ENCODE measurements at regions of chr3 and their contacts with region 1.

Region 1: GRCh38 chr3:46705022-46705530 is 3.9 kb downstream of the TMIE start:
- DNase-seq: peak; percentile 64 to 79 (median 71)
- ATAC-seq: peak; percentile 75 to 86 (median 80)
- H3K4me3 ChIP-seq: no peak overlapping the region
- H3K27ac ChIP-seq: no peak overlapping the region
- H3K4me1 ChIP-seq: peaks cover 4 to 31% (median 16%) of the 10 kb centered on the region in 12 donors
- H3K27me3 ChIP-seq: peaks cover 0 to 19% (median 0%) of the 10 kb centered on the region in 9 donors
- CTCF ChIP-seq: peak; percentile 94 to 99 (median 96)
- POLR2A ChIP-seq: peak in 1 of 2 donors; percentile 16

Region 2: GRCh38 chr3:46542801-46543201 is 162.3 kb before region 1 on chr3:
- intact Hi-C with region 1: no loop called
- DNase-seq: peak in 1 of 5 donors; percentile 38
- ATAC-seq: peak; percentile 34 to 54 (median 46)
- H3K4me3 ChIP-seq: no peak overlapping the region
- H3K27ac ChIP-seq: peak overlapping the region in 1 of 12 donors; percentile 47
- H3K4me1 ChIP-seq: peaks cover 0 to 33% (median 12%) of the 10 kb centered on the region in 12 donors
- H3K27me3 ChIP-seq: no peaks in the 10 kb centered on the region
- CTCF ChIP-seq: no peak
- POLR2A ChIP-seq: no peak

Region 3: GRCh38 chr3:46866720-46867549 is 161.9 kb after region 1 on chr3:
- intact Hi-C with region 1: loop called in 2 of 10 experiments (anchors 2 to 10 kb)
- DNase-seq: peak; percentile 80 to 93 (median 86)
- ATAC-seq: peak in 3 of 4 donors; percentile 8 to 32 (median 18)
- H3K4me3 ChIP-seq: no peak overlapping the region
- H3K27ac ChIP-seq: peak overlapping the region; percentile 63 to 100 (median 86)
- H3K4me1 ChIP-seq: peaks cover 13 to 78% (median 38%) of the 10 kb centered on the region in 12 donors
- H3K27me3 ChIP-seq: no peaks in the 10 kb centered on the region
- CTCF ChIP-seq: peak; percentile 83 to 93 (median 88)
- POLR2A ChIP-seq: no peak

Region 4: DNA sequence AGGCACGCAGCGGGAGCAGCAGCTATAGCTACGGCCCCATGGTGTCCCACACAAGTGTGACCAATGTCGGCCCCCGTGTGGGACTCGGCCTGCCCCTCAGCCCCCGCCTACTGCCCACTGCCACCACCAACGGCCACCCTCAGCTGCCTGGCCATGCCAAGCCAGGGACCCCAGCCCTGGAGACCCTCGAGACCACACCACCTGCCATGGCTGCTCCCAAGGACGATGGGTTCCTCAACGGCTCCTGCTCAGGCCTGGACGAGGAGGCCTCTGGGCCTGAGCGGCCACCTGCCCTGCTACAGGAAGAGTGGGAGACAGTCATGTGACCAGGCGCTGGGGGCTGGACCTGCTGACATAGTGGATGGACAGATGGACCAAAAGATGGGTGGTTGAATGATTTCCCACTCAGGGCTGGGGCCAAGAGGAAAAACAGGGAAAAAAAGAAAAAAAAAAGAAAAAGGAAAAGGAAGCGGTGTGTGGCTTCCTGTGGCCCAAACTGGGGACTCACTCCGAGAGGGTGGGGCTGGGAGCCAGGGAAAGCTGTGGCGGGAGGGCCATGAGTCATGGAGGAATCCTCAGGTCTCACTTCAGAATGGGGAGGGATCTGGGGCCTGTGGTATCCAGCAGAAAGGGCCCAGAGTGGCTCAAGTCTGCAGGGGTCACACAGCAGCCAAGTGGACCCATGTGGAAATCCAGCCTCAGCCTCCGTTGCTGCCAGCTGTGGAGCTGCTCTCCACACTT is 198.4 kb after region 1 on chr3:
- intact Hi-C with region 1: loop called in 5 of 10 experiments (anchors 2 to 5 kb)
- DNase-seq: peak in 2 of 5 donors; percentile 33 to 43
- ATAC-seq: peak in 2 of 4 donors; percentile 5 to 26
- H3K4me3 ChIP-seq: no peak overlapping the region
- H3K27ac ChIP-seq: no peak overlapping the region
- H3K4me1 ChIP-seq: peaks cover 0 to 27% (median 9%) of the 10 kb centered on the region in 12 donors
- H3K27me3 ChIP-seq: peaks cover 0 to 8% (median 0%) of the 10 kb centered on the region in 9 donors
- CTCF ChIP-seq: no peak
- POLR2A ChIP-seq: no peak

Region 5: DNA sequence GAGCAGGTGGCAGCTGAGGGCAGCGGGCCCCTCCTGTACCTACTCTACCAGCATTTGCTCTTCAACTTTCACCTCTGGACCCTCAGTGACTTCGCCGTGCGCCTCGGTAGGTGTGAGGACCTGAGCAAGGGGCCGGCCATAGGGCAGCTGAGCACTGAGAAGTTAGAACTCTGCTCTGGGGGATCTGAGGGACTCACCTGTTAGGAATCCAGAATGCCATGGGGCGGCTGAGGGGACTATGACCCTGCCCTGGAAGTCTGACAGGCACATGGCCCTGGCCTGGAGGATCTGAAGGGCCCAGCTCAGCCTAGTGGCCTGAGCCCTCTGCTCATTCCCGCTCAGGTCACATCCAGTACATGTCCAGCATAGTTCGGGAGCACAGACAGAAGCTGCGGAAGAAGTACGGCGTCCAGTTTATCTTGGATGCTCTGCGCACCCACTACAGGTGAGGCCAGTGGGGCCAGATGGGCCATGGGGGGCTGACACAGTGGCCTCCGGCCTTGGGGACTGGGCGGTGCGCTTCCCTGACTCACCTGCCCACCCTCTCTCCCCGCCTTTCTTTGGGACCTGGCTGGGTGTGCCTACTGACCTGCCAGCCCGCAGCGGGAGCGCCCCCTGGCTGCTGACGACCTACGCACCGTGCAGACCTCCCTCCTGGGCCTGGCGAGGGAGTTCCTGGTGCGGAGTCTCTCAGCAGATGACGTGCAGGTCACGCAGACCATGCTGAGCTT is 293.2 kb after region 1 on chr3:
- intact Hi-C with region 1: loop called in 6 of 10 experiments (anchors 5 to 10 kb)
- DNase-seq: peak; percentile 67 to 89 (median 74)
- ATAC-seq: peak; percentile 66 to 84 (median 74)
- H3K4me3 ChIP-seq: no peak overlapping the region
- H3K27ac ChIP-seq: no peak overlapping the region
- H3K4me1 ChIP-seq: peaks cover 0 to 13% (median 0%) of the 10 kb centered on the region in 12 donors
- H3K27me3 ChIP-seq: no peaks in the 10 kb centered on the region
- CTCF ChIP-seq: peak; percentile 68 to 87 (median 80)
- POLR2A ChIP-seq: no peak

Region 6: GRCh38 chr3:47065681-47066080 is 360.6 kb after region 1 on chr3:
- intact Hi-C with region 1: no loop called
- DNase-seq: no peak
- ATAC-seq: no peak
- H3K4me3 ChIP-seq: no peak overlapping the region
- H3K27ac ChIP-seq: no peak overlapping the region
- H3K4me1 ChIP-seq: no peaks in the 10 kb centered on the region
- H3K27me3 ChIP-seq: no peaks in the 10 kb centered on the region
- CTCF ChIP-seq: no peak
- POLR2A ChIP-seq: no peak

Region 7: DNA sequence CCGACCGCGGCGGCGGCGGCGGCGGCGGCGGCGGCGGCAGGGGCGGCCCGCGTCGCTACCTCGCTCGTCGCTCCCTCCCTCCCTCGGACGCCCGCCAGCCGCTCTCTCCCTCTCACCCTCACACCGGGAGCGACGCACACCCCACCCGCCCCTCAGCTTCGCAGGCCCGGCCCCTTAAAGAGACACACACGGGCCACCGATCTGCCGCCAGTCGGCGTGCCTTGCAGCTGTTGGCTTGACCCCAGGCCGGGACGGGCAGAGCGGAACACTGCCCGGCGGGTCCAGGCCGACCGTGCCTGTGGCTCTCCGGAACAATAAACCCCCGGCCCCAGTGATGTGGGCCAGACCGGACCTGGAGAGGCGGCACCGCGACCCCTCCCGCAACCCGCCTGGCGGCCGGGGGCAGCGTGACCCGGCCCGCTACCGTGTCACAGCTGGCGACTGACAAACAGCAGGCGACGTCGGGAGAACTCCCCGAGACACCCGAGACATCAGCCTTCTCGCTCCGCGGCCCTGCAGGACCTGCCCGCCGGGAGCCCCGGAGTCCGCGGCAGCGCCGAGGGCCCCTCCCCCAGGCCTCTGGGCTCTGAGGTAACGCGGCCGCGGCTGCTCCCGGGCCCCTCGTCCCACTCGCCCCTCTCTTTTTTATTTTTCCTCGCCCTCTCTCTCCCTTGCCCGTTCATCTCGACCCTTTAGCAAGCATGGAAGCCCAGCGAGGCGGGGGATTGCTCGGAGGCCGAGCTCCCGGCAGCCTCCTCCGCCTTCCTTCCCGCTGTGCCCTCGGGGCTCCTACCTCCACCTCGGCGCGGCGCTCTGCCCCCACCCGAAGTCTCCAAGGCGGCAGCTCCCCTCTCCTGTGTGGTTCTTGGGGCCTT is 459.2 kb after region 1 on chr3 and contains the start of gene SETD2:
- intact Hi-C with region 1: loop called in 1 of 10 experiments (anchors 10 kb)
- DNase-seq: peak; percentile 96 to 98 (median 97)
- ATAC-seq: peak; percentile 96 to 98 (median 98)
- H3K4me3 ChIP-seq: peak within 1 kb of the TSS; percentile 66 to 97 (median 95)
- H3K27ac ChIP-seq: peak within 1 kb of the TSS; percentile 88 to 98 (median 95)
- H3K4me1 ChIP-seq: peaks cover 16 to 56% (median 45%) of the 10 kb centered on the region in 12 donors
- H3K27me3 ChIP-seq: no peaks in the 10 kb centered on the region
- CTCF ChIP-seq: peak; percentile 1 to 59 (median 32)
- POLR2A ChIP-seq: peak in 1 of 2 donors; percentile 39
- total RNA-seq, gene SETD2: 24.6 to 34.1 (median 31.7) TPM

Region 8: GRCh38 chr3:47313341-47314055 is 608.4 kb after region 1 on chr3:
- intact Hi-C with region 1: no loop called
- DNase-seq: no peak
- ATAC-seq: no peak
- H3K4me3 ChIP-seq: no peak overlapping the region
- H3K27ac ChIP-seq: peak overlapping the region in 1 of 12 donors; percentile 37
- H3K4me1 ChIP-seq: peaks cover 0 to 53% (median 22%) of the 10 kb centered on the region in 12 donors
- H3K27me3 ChIP-seq: no peaks in the 10 kb centered on the region
- CTCF ChIP-seq: no peak
- POLR2A ChIP-seq: no peak

Region 9: DNA sequence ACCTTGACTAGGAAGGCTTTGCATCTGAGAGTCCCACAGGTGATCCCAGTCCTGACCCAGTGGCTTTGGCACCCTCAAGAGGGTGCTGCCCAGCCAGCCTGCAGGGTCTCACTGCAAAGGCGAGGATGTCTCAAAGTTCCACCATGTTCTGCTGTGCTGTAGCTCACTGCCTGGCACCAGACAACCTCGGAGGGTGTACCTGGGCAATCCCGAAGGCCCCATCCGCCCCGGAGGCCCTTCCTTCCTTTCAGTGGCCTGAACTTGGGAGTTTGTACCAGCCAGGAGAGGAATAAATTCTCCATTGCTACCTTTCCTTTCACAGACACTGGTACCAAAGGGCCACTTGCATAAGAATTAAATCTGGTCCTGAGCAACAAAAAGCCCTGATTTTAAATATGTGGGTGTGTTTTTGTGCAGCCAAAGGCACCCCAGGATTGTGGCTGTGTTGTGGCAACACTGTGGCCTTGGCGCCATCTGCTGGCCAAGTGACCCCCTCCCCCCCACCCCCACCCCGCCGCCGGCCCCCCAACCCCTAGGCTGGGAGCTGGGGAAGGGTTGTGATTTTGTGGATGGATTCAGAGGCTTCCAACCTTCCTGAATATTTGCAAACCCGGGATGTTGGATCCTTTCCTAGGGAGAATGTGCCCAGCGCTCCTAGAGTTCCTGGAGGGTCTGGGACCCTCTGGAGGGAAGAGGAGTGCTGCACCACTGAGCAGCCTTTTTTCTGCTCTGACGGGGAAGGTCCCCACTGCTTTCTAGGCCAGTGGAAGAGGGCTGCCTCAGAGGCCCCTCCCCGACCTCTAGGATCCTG is 666.0 kb after region 1 on chr3:
- intact Hi-C with region 1: loop called in 1 of 10 experiments (anchors 10 kb)
- DNase-seq: no peak
- ATAC-seq: peak in 2 of 4 donors; percentile 35 to 41
- H3K4me3 ChIP-seq: no peak overlapping the region
- H3K27ac ChIP-seq: no peak overlapping the region
- H3K4me1 ChIP-seq: peaks cover 0 to 10% (median 0%) of the 10 kb centered on the region in 12 donors
- H3K27me3 ChIP-seq: peaks cover 0 to 10% (median 0%) of the 10 kb centered on the region in 9 donors
- CTCF ChIP-seq: peak; percentile 25 to 62 (median 49)
- POLR2A ChIP-seq: no peak

Measured in heart left ventricle (tissue), 16 donors.